Activated CD4-positive, alpha-beta memory T cell treated with anti-CD3 and anti-CD28 coated beads, Interleukin-2, amount 10 ng/mL, durations not matched to agents 7 days and 5 days (primary cell): ENCODE measurements at regions of chr2 and their contacts with region 1.

Region 1: GRCh38 chr2:102442967-102443828 is 20.2 kb downstream of the IL18RAP start:
- DNase-seq: peak; percentile 53
- H3K4me3 Mint-ChIP-seq: no peak overlapping the region
- H3K27ac Mint-ChIP-seq: no peak overlapping the region
- H3K4me1 Mint-ChIP-seq: peaks cover 11% of the 10 kb centered on the region
- H3K27me3 Mint-ChIP-seq: no peaks in the 10 kb centered on the region

Region 2: GRCh38 chr2:102251042-102251848 is 192.0 kb before region 1 on chr2:
- CTCF ChIA-PET with region 1: interaction called, 29 read pairs
- POLR2A ChIA-PET with region 1: interaction called, 5 read pairs
- DNase-seq: peak; percentile 69
- H3K4me3 Mint-ChIP-seq: peak overlapping the region; percentile 76
- H3K27ac Mint-ChIP-seq: peak overlapping the region; percentile 61
- H3K4me1 Mint-ChIP-seq: peaks cover 41% of the 10 kb centered on the region
- H3K27me3 Mint-ChIP-seq: peaks cover 6% of the 10 kb centered on the region

Region 3: DNA sequence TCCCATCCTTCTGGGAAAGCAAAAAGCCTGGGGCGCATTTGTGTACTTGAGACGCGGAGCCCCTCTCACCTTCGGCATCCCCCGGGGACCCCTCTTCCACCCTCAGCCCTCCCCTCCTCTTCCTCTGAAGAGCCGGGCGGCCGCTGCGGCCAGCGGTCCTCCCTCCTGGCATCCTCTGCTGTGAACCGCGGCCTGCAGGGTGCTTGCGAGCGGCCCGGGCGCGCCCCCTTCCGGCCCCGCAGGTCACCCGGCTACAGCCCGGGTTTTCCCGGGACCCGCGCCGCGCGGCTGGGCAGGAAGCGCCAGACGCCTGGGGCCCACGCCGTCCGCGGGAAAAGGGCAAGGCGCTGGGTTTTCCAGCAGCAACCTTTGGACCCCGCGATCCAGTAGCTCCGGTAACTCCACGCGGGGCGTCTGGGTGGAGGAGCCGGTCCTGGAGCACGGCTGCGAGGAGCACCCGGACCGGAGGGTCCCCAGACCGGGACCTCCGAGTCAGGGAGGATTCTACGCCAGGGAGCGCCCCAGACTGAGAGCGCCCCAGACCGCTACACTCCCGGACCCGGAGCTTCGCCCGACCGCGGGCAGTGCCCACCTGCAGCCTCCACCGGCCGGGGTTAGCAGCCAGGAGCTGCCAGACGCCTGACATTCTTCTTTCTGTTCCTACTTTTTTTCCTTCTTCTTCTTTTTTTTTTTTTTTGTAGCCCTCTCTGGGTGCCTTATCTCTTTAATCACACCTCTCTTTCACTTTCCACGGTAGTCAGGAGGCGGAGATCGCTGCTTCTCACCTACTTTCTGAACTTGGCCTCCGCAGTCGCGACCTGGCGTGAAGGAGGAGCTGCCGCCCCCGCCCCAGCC is 87.4 kb before region 1 on chr2 and contains the start of gene IL18R1:
- CTCF ChIA-PET with region 1: interaction called, 15 read pairs
- POLR2A ChIA-PET with region 1: interaction called, 11 read pairs
- DNase-seq: peak; percentile 75
- H3K4me3 Mint-ChIP-seq: peak within 1 kb of the TSS; percentile 98
- H3K27ac Mint-ChIP-seq: peak within 1 kb of the TSS; percentile 87
- H3K4me1 Mint-ChIP-seq: peaks cover 44% of the 10 kb centered on the region
- H3K27me3 Mint-ChIP-seq: no peaks in the 10 kb centered on the region
- total RNA-seq, gene IL18R1: 22.8 to 24.0 TPM

Region 4: DNA sequence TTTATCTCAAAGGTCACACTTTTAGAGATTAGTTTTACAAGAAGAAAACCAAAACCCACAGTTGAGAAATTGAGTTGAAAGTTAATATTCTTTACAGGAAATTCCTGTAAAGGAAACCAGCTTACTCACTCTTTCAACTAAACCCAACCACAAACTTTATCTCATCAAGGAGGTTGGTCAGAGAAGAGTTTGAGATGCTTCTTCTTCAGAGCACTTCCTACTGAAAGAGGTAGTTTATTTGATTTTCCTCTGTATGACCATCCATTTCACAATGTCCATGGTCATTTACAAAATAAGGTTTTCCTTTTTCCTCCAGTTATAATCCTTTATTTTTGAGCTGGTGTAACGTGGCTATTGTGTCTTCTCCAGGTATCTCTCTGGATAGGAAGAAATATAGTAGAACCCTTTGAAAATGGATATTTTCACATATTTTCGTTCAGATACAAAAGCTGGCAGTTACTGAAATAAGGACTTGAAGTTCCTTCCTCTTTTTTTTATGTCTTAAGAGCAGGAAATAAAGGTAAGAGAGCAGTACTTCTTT is 24.7 kb before region 1 on chr2:
- CTCF ChIA-PET with region 1: interaction called, 19 read pairs
- POLR2A ChIA-PET with region 1: no interaction called
- DNase-seq: no peak
- H3K4me3 Mint-ChIP-seq: peak overlapping the region; percentile 75
- H3K27ac Mint-ChIP-seq: peak overlapping the region; percentile 95
- H3K4me1 Mint-ChIP-seq: peaks cover 63% of the 10 kb centered on the region
- H3K27me3 Mint-ChIP-seq: peaks cover 14% of the 10 kb centered on the region

Region 5: GRCh38 chr2:102424754-102425153 is 18.4 kb before region 1 on chr2:
- CTCF ChIA-PET with region 1: interaction called, 19 read pairs
- POLR2A ChIA-PET with region 1: no interaction called
- DNase-seq: no peak
- H3K4me3 Mint-ChIP-seq: no peak overlapping the region
- H3K27ac Mint-ChIP-seq: no peak overlapping the region
- H3K4me1 Mint-ChIP-seq: peaks cover 76% of the 10 kb centered on the region
- H3K27me3 Mint-ChIP-seq: peaks cover 16% of the 10 kb centered on the region

Region 6: GRCh38 chr2:102509749-102510148 is 66.6 kb after region 1 on chr2:
- CTCF ChIA-PET with region 1: no interaction called
- POLR2A ChIA-PET with region 1: no interaction called
- DNase-seq: no peak
- H3K4me3 Mint-ChIP-seq: no peak overlapping the region
- H3K27ac Mint-ChIP-seq: no peak overlapping the region
- H3K4me1 Mint-ChIP-seq: peaks cover 4% of the 10 kb centered on the region
- H3K27me3 Mint-ChIP-seq: peaks cover 26% of the 10 kb centered on the region